Calu3 (cell line): ENCODE measurements at regions of chr19 and their contacts with region 1.

Region 1: DNA sequence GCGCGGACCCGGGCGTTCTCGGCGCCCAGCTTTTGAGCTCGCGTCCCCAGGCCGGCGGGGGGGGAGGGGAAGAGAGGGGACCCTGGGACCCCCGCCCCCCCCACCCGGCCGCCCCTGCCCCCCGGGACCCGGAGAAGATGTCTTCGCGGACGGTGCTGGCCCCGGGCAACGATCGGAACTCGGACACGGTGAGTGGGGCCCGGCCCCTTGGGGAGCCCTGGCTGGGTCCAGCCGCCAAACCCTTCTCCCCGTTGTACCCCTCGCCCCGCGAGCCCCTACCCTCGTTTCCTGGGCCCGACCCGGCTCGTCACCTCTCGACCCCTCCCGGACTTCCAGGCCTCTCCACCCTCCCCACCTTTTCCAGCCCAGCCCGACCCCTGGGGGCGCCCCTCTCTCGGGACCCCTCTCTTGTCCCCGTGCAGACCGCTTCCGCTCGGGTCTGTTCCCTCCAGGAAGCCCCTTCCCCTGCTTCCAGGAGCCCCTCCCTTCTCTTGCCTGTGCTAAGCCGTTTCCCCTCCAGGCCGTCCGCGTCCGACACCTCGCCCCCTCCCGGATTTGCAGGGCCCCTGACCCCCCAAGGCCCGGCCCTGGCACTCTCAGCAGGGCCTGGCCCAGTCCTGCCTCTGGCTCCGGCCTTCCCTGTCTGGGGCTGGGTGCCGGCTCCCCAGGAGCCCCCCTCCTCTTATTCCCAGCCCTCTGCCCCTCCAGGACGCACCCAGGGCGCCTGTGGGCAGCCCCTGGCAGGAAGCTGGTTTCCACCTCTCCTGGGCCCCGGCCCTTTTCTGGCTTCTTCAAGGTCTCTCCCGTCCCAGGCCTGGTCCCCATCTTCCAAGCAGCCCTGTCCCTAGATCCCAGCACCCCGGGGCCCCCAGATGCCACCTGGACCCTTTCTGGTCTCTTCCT is 632 bp downstream of the MARK4 start:
- DNase-seq: no peak
- H3K4me3 Mint-ChIP-seq: peak overlapping the region; percentile 88
- H3K27ac Mint-ChIP-seq: peak overlapping the region; percentile 54
- H3K4me1 Mint-ChIP-seq: peaks cover 32% of the 10 kb centered on the region
- H3K27me3 Mint-ChIP-seq: peaks cover 14% of the 10 kb centered on the region
- CTCF ChIP-seq: no peak

Region 2: DNA sequence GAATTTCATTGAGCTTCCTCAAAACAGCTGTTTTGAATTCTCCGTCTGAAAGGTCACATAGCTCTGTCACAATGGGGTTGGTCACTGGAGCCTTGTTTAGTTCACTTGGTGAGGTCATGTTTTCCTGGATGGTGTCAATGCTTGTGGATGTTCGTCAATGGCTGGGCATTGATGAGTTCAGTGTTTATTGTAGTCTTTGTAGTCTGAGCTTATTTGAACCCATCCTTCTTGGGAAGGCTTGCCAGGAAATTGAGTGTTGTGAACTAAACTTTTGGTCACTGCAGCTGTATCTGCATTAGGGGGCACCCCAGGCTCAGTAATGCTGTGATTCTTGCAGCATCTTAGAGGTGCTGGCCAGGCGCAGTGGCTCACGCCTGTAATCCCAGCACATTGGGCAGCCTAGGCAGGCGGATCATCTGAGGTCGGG is 51.1 kb before region 1 on chr19:
- CTCF ChIA-PET with region 1: interaction called, 10 read pairs
- intact Hi-C with region 1: loop called (anchors 2 kb)
- DNase-seq: peak; percentile 59
- H3K4me3 Mint-ChIP-seq: no peak overlapping the region
- H3K27ac Mint-ChIP-seq: no peak overlapping the region
- H3K4me1 Mint-ChIP-seq: no peaks in the 10 kb centered on the region
- H3K27me3 Mint-ChIP-seq: peaks cover 41% of the 10 kb centered on the region
- CTCF ChIP-seq: no peak

Region 3: DNA sequence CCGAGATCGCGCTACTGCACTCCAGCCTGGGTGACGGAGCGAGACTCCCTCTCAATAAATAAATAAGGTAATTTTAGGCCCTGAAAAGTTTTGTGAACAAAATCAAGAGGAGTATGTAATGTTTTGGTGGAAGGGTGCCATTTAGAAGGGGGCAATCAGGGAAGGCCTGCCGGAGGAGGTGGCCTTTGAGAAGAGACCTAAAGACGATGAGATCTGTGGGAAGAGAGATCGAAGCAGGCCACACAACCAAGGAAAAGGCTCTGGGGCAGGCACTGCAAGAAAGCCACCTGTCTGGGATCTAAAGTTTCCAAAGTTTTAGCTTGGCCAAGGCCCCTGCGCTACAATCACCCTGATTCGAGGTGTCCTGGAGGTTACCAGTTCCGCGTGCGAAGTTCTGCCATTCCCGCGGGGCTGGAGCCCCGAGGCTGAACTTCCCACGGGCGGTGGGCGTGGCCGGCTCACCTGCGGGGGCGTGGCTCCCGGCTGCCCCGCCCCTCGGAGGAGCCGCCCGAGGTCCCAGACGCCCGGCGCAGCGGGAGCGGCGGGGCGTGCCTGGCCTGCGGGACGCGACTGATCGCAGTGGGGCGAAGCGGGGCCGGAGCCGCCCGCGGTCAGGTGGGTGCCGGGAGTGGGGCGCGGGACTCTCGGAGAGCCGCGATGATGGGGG is 88.7 kb after region 1 on chr19 and contains the start of gene KLC3:
- CTCF ChIA-PET with region 1: interaction called, 4 read pairs
- intact Hi-C with region 1: loop called (anchors 2 kb)
- DNase-seq: peak; percentile 84
- H3K4me3 Mint-ChIP-seq: no peak within 1 kb of the TSS
- H3K27ac Mint-ChIP-seq: peak within 1 kb of the TSS; percentile 71
- H3K4me1 Mint-ChIP-seq: no peaks in the 10 kb centered on the region
- H3K27me3 Mint-ChIP-seq: no peaks in the 10 kb centered on the region
- CTCF ChIP-seq: no peak
- total RNA-seq, gene KLC3: 3.3 and 4.5 TPM in 2 replicates

Region 4: GRCh38 chr19:45370410-45371204 is 118.9 kb after region 1 on chr19 and contains the start of gene ERCC2:
- CTCF ChIA-PET with region 1: no interaction called
- intact Hi-C with region 1: no loop called
- DNase-seq: peak; percentile 100
- H3K4me3 Mint-ChIP-seq: peak within 1 kb of the TSS; percentile 96
- H3K27ac Mint-ChIP-seq: peak within 1 kb of the TSS; percentile 98
- H3K4me1 Mint-ChIP-seq: peaks cover 8% of the 10 kb centered on the region
- H3K27me3 Mint-ChIP-seq: no peaks in the 10 kb centered on the region
- CTCF ChIP-seq: no peak
- total RNA-seq, gene ERCC2: 56.4 and 57.7 TPM in 2 replicates

Region 5: GRCh38 chr19:45681391-45682015 is 429.8 kb after region 1 on chr19:
- CTCF ChIA-PET with region 1: no interaction called
- intact Hi-C with region 1: no loop called
- DNase-seq: peak; percentile 96
- H3K4me3 Mint-ChIP-seq: peak overlapping the region; percentile 73
- H3K27ac Mint-ChIP-seq: peak overlapping the region; percentile 11
- H3K4me1 Mint-ChIP-seq: peaks cover 8% of the 10 kb centered on the region
- H3K27me3 Mint-ChIP-seq: no peaks in the 10 kb centered on the region
- CTCF ChIP-seq: peak; percentile 99